Activated CD4-positive, alpha-beta memory T cell treated with anti-CD3 and anti-CD28 coated beads for 36 hours (primary cell): ENCODE measurements at regions of chr3 and their contacts with region 1.

Region 1: DNA sequence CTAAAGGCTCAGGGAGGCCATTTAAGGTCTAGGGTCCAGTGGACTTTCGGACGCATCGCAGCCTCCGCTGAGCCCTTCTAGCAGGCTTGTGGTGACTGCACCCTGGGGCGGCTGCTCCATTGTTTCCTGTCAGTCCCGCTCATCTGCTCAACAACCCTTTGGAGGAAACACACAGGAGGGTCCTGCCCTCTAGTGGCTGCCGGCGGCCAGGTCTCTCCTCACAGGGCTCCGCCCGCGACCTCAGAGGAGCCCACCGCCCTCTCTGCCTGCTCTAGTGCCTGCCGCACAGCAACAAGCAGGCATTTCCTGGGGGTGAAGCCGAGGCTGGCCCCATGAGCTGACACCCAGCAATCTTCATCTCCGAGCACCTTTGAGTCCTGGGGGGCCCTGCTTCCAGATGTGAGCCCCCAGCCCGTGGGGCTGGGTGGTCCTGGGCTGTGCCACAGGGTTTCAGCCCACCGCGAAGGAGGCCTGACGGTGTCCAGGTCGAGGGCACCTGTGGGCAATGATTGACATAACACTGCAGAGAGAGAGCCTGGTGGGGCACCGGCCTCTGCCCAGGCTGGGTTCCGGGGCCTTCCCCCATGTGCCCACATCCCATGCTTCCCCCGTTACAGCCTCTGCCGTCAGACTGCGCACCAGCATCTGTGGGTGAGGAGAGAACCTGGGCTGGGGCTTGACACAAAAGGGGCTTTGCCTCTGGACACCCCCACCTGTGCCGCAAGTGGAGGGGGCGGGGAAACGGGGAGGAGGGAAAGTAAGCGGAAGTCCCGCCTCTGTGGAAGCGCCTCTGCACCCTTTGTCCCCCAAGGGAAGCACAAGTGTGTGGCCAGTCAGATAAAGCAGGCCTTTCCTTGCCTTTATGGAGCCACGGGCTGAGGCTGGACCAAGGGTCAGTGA is 27.0 kb upstream of the SFMBT1 start:
- DNase-seq: peak; percentile 94
- H3K4me3 Mint-ChIP-seq: peak overlapping the region; percentile 82
- H3K27ac Mint-ChIP-seq: peak overlapping the region; percentile 85
- H3K4me1 Mint-ChIP-seq: peaks cover 12% of the 10 kb centered on the region
- H3K27me3 Mint-ChIP-seq: no peaks in the 10 kb centered on the region

Region 2: DNA sequence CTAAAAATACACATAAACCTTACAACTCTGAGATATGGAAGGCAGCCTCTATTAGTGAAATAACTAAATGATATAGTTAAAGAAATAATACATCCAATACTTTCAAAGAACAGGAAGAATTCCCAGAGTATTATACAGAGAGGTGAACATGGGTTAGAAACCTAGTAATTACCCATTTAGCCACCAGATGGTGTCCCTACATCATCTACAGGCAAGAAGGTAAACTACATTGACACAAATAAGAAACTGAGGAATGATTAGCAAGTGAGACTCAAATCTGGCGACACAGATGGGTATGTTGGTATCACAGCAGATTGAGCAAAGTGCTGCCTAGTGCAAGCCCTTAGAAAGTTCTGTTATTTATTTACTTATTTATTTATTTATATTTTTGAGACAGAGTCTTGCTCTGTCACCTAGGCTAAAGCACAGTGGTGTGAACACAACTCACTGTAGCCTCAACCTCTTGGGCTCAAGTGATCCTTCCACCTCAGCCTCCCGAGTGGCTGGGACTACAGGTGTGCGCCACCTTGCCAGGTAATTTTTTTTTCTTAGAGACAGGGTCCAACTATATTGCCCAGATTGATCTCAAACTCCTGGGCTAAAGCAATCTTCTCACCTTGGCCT is 330.4 kb before region 1 on chr3:
- CTCF ChIA-PET with region 1: no interaction called
- POLR2A ChIA-PET with region 1: no interaction called
- intact Hi-C with region 1: loop called (anchors 1 kb)
- DNase-seq: no peak
- H3K4me3 Mint-ChIP-seq: no peak overlapping the region
- H3K27ac Mint-ChIP-seq: no peak overlapping the region
- H3K4me1 Mint-ChIP-seq: no peaks in the 10 kb centered on the region
- H3K27me3 Mint-ChIP-seq: no peaks in the 10 kb centered on the region

Region 3: DNA sequence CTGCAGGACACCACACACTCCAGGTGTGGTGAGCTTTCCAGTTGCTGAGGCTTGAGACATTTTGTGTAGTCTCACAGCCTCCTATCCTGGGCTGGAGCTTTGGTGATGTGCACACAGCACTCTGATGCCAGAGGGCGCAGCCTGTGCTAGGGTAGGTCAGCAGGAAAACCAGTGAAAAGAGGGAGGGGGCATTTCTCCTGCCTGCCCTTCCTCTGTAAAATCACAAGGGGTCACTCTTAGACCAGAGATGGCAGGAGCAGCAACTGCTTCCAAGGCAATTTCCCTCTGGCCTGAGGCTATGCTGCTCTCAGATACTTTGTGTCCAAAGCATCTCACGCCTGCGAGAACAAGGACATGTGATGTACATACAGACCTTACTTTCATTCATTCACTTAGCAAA is 221.6 kb before region 1 on chr3:
- CTCF ChIA-PET with region 1: interaction called, 9 read pairs
- POLR2A ChIA-PET with region 1: no interaction called
- intact Hi-C with region 1: loop called (anchors 1 kb)
- DNase-seq: peak; percentile 51
- H3K4me3 Mint-ChIP-seq: no peak overlapping the region
- H3K27ac Mint-ChIP-seq: no peak overlapping the region
- H3K4me1 Mint-ChIP-seq: no peaks in the 10 kb centered on the region
- H3K27me3 Mint-ChIP-seq: no peaks in the 10 kb centered on the region

Region 4: GRCh38 chr3:53045518-53046170 is 27.3 kb before region 1 on chr3 and contains the start of gene SFMBT1:
- CTCF ChIA-PET with region 1: interaction called, 3 read pairs
- POLR2A ChIA-PET with region 1: no interaction called
- intact Hi-C with region 1: loop called (anchors 1 kb)
- DNase-seq: peak; percentile 83
- H3K4me3 Mint-ChIP-seq: peak within 1 kb of the TSS; percentile 96
- H3K27ac Mint-ChIP-seq: peak within 1 kb of the TSS; percentile 97
- H3K4me1 Mint-ChIP-seq: peaks cover 44% of the 10 kb centered on the region
- H3K27me3 Mint-ChIP-seq: peaks cover 2% of the 10 kb centered on the region
- total RNA-seq, gene SFMBT1: 22.1 to 22.8 TPM